Activated CD8-positive, alpha-beta T cell treated with anti-CD3 and anti-CD28 coated beads, Interleukin-2, amount 10 ng/mL, durations not matched to agents 7 days and 5 days (primary cell): ENCODE measurements at regions of chr14 and their contacts with region 1.

Region 1: DNA sequence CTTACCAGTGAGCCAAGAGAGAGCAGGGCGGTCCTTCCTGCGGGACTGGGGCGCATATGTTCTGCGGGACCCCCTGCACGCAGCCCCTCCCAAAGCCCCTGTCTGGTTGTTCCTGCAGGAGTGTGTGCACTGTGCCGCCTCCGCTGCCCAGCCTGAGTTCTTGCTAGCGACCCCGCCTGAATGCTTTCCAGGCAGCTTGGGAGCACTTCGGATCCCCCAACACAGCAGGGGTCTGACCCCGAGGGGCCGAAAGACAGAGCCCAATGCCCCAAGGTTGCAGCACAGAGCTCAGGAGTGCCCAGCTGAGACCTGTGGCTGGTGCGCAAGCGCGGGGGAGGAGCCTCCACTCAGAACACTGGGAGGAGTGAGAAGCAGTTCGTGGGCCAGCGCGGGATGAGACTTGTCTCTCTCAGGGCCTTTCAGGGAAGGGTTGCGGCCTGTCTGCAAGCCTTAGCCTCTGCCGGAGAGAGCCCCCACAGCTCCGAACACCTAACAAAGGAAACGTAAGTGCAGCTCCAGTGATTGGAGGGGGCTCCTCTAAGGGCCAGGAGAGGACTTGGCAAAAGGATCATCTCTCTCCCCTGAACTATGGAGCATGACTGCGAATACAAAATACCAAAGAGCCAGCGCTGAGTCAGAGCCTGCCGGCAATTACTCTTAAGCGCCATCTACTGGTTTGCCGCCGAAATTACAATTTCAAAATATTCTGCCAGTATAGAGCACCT is 50.5 kb downstream of the GTF2A1 start:
- DNase-seq: peak; percentile 92
- ATAC-seq: peak; percentile 100
- H3K4me3 Mint-ChIP-seq: peak overlapping the region; percentile 93
- H3K27ac Mint-ChIP-seq: peak overlapping the region; percentile 92
- H3K4me1 Mint-ChIP-seq: peaks cover 42% of the 10 kb centered on the region
- H3K27me3 Mint-ChIP-seq: no peaks in the 10 kb centered on the region

Region 2: GRCh38 chr14:80954687-80955299 is 215.5 kb before region 1 on chr14:
- CTCF ChIA-PET with region 1: interaction called, 21 read pairs
- POLR2A ChIA-PET with region 1: interaction called, 4 read pairs
- DNase-seq: peak; percentile 79
- ATAC-seq: peak; percentile 56
- H3K4me3 Mint-ChIP-seq: peak overlapping the region; percentile 78
- H3K27ac Mint-ChIP-seq: peak overlapping the region; percentile 71
- H3K4me1 Mint-ChIP-seq: peaks cover 46% of the 10 kb centered on the region
- H3K27me3 Mint-ChIP-seq: peaks cover 23% of the 10 kb centered on the region

Region 3: GRCh38 chr14:80996049-80996901 is 174.0 kb before region 1 on chr14:
- CTCF ChIA-PET with region 1: interaction called, 34 read pairs
- POLR2A ChIA-PET with region 1: no interaction called
- DNase-seq: peak; percentile 32
- ATAC-seq: peak; percentile 72
- H3K4me3 Mint-ChIP-seq: no peak overlapping the region
- H3K27ac Mint-ChIP-seq: no peak overlapping the region
- H3K4me1 Mint-ChIP-seq: no peaks in the 10 kb centered on the region
- H3K27me3 Mint-ChIP-seq: peaks cover 26% of the 10 kb centered on the region

Region 4: DNA sequence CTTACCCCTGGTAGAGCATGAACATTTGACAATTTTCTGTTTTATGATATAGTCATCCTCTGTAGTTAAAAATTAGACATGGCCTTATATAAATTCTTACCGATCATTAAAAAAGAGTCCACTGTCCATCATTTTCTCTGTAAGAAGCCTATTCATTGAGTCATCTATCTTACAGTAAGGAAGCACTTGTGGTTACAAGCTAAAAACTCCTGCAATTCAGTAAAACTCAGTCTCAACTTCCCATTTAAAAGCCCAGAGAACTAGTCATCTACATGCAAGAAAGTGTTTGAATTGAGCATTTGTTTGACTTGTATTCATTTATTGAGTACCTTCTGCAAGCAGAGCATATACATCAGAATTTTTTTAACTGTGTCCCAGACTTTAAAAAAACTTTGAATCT is 12.8 kb before region 1 on chr14:
- CTCF ChIA-PET with region 1: interaction called, 25 read pairs
- POLR2A ChIA-PET with region 1: no interaction called
- DNase-seq: no peak
- ATAC-seq: no peak
- H3K4me3 Mint-ChIP-seq: no peak overlapping the region
- H3K27ac Mint-ChIP-seq: no peak overlapping the region
- H3K4me1 Mint-ChIP-seq: peaks cover 3% of the 10 kb centered on the region
- H3K27me3 Mint-ChIP-seq: no peaks in the 10 kb centered on the region

Region 5: GRCh38 chr14:81211844-81212243 is 41.6 kb after region 1 on chr14:
- CTCF ChIA-PET with region 1: interaction called, 18 read pairs
- POLR2A ChIA-PET with region 1: no interaction called
- DNase-seq: peak; percentile 47
- ATAC-seq: peak; percentile 51
- H3K4me3 Mint-ChIP-seq: no peak overlapping the region
- H3K27ac Mint-ChIP-seq: no peak overlapping the region
- H3K4me1 Mint-ChIP-seq: peaks cover 22% of the 10 kb centered on the region
- H3K27me3 Mint-ChIP-seq: no peaks in the 10 kb centered on the region